ENCODE measurements at regions of chrX and their contacts with region 1.

Region 1: DNA sequence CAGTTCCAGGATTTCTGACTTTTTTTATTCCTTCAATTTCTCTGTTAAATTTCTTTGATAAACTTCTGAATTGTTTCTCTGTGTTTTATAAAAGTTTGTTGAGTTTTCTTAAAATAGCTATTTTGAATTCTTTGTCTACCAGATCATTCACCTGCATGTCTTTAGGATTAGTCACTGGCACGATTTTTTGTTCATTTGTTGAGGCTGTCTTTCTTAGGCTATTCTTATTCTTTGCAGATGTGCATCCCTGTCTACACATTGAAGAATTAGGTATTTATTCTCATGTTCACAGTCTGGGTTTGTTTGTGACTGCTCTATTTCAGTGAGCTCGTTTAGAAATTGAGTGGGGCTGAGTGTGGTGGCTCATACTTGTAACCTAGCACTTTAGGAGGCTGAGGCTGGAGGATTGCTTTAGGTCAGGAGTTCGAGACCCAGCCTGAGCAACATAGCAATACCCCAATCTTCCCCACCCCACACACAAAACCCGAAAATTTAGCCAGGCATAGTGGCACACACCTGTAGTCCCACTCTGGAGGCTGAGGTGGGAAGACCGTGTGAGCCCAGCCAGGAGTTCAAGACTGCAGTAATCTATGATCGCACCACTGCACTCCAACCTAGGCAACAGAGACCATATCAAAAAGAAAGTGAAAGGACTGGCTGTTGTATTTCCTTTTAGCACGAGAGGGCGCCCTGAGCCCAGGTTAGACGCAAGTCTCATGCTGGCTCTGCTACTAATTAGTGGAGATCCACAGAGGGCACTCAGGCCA is 42.0 kb downstream of the F8 start:
- DNase-seq: peak; percentile 48 to 82 (median 74)
- ATAC-seq: peak; percentile 98
- H3K4me3 ChIP-seq: peak overlapping the region; percentile 65
- H3K4me3 Mint-ChIP-seq: peak overlapping the region; percentile 53 to 93 (median 82)
- H3K27ac ChIP-seq: peak overlapping the region; percentile 54
- H3K27ac Mint-ChIP-seq: peak overlapping the region; percentile 73 to 96 (median 88)
- H3K4me1 ChIP-seq: peaks cover 0 to 5% of the 10 kb centered on the region in 2 donors
- H3K4me1 Mint-ChIP-seq: peaks cover 0 to 16% (median 7%) of the 10 kb centered on the region in 7 donors
- H3K27me3 ChIP-seq: no peaks in the 10 kb centered on the region
- H3K27me3 Mint-ChIP-seq: no peaks in the 10 kb centered on the region

Region 2: GRCh38 chrX:155056877-155057792 is 76.6 kb after region 1 on chrX:
- CTCF ChIA-PET with region 1: interaction called, 8 read pairs
- POLR2A ChIA-PET with region 1: interaction called, 3 read pairs
- intact Hi-C with region 1: loop called (anchors 1 kb)
- DNase-seq: peak; percentile 20 to 55 (median 36)
- ATAC-seq: peak; percentile 93
- H3K4me3 ChIP-seq: peak overlapping the region; percentile 47
- H3K4me3 Mint-ChIP-seq: peak overlapping the region; percentile 52 to 81 (median 76)
- H3K27ac ChIP-seq: peak overlapping the region; percentile 30
- H3K27ac Mint-ChIP-seq: peak overlapping the region in 8 of 9 donors; percentile 23 to 81 (median 60)
- H3K4me1 ChIP-seq: peaks cover 0 to 5% of the 10 kb centered on the region in 2 donors
- H3K4me1 Mint-ChIP-seq: peaks cover 0 to 31% (median 21%) of the 10 kb centered on the region in 7 donors
- H3K27me3 ChIP-seq: no peaks in the 10 kb centered on the region
- H3K27me3 Mint-ChIP-seq: no peaks in the 10 kb centered on the region

Region 3: DNA sequence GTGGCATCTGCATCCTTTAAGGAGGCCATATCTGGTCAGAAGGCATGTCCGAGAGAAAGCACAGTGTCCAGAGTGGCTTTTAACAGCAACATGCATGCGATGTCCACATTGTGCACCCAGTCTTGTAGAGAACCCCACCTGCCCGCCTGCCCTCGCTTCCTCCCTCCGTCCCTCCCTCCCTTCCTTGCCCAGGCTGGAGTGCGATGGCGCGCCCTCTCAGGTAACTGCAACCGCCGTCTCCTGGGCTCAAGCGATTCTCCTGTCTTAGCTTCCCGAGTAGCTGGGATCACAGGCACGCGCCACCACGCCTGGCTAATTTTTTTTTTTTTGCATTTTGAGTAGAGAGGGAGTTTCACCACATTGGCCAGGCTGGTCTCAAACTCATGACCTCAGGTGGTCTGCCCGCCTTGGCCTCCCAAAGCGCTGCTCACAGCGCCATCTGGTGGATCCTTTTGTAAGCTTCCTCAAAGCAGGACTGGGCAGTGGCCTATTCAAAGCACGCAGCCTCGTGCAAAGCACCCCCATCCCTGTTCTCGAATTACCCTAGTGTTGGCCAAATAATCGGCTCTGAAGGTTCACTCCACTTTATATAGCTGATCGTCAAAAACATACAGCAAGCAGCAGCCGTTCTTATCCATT is 105.8 kb after region 1 on chrX:
- CTCF ChIA-PET with region 1: interaction called, 6 read pairs
- POLR2A ChIA-PET with region 1: no interaction called
- intact Hi-C with region 1: loop called (anchors 1 to 2 kb)
- DNase-seq: peak in 8 of 9 donors; percentile 13 to 39 (median 22)
- ATAC-seq: peak; percentile 53
- H3K4me3 ChIP-seq: no peak overlapping the region
- H3K4me3 Mint-ChIP-seq: no peak overlapping the region
- H3K27ac ChIP-seq: no peak overlapping the region
- H3K27ac Mint-ChIP-seq: no peak overlapping the region
- H3K4me1 ChIP-seq: no peaks in the 10 kb centered on the region
- H3K4me1 Mint-ChIP-seq: peaks cover 0 to 6% (median 0%) of the 10 kb centered on the region in 7 donors
- H3K27me3 ChIP-seq: no peaks in the 10 kb centered on the region
- H3K27me3 Mint-ChIP-seq: no peaks in the 10 kb centered on the region

Region 4: DNA sequence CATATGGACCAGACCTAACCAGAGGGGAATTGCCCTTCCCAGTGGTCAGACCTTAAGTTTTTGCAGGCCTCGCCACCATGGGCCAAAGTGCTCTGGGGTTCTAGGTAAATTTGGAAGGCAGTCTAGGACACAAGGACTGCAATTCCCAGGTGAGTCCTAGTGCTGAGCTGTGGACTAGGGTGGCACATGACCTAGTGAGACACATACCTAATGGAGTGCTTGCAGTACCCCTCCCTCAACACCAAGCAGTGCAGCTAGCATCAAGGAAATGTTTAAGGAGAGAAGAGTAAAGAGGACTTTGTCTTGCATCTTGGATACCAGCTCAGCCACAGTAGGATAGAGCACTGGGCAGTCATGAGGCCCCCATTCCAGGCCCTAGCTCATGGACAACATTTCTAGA is 151.6 kb after region 1 on chrX:
- CTCF ChIA-PET with region 1: no interaction called
- POLR2A ChIA-PET with region 1: no interaction called
- intact Hi-C with region 1: no loop called
- DNase-seq: no peak
- ATAC-seq: no peak
- H3K4me3 ChIP-seq: no peak overlapping the region
- H3K4me3 Mint-ChIP-seq: no peak overlapping the region
- H3K27ac ChIP-seq: no peak overlapping the region
- H3K27ac Mint-ChIP-seq: no peak overlapping the region
- H3K4me1 ChIP-seq: no peaks in the 10 kb centered on the region
- H3K4me1 Mint-ChIP-seq: no peaks in the 10 kb centered on the region
- H3K27me3 ChIP-seq: no peaks in the 10 kb centered on the region
- H3K27me3 Mint-ChIP-seq: no peaks in the 10 kb centered on the region

Region 5: DNA sequence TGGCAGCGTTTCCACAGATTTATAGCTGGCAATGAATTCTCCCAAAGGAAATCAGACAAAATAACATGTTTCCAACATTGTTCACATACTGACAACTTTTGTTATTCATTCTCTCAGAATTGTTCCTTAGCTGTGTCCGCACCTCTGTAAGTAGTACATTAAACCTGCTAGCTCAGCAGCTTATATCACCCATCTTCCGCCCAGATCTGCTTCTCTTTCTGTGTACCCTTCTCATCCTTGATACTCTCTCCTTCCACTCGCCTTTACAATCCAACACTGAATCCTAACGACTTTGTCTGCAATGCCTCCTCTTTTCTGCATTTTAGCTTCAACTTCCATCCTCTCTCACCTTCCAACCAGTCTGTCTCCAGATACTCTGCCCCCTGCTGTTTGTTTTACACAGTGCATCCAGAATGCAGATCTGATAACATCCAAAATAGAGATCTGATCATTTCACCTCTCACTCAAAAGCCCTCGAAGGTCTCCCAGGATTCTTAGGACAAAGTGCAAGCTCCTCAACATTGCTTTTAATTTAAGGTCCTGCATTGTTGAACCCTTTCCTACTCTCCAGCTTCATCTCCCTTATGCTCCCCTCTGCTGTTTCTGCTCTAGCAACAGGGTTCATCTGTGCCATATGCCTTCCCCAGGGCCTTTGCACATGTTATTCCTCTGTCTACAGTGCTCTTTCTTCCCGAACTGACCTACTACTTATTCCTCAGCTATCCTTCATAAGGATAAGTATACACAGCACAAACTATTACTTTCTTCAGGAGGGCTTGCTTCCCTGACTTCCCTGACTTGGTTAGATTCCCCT is 168.4 kb after region 1 on chrX:
- CTCF ChIA-PET with region 1: no interaction called
- POLR2A ChIA-PET with region 1: no interaction called
- intact Hi-C with region 1: loop called (anchors 1 kb)
- DNase-seq: peak in 8 of 9 donors; percentile 3 to 38 (median 25)
- ATAC-seq: peak; percentile 37
- H3K4me3 ChIP-seq: no peak overlapping the region
- H3K4me3 Mint-ChIP-seq: no peak overlapping the region
- H3K27ac ChIP-seq: no peak overlapping the region
- H3K27ac Mint-ChIP-seq: peak overlapping the region in 3 of 9 donors; percentile 38 to 73 (median 40)
- H3K4me1 ChIP-seq: no peaks in the 10 kb centered on the region
- H3K4me1 Mint-ChIP-seq: peaks cover 0 to 9% (median 4%) of the 10 kb centered on the region in 7 donors
- H3K27me3 ChIP-seq: no peaks in the 10 kb centered on the region
- H3K27me3 Mint-ChIP-seq: peaks cover 0 to 11% (median 0%) of the 10 kb centered on the region in 5 donors

Region 6: DNA sequence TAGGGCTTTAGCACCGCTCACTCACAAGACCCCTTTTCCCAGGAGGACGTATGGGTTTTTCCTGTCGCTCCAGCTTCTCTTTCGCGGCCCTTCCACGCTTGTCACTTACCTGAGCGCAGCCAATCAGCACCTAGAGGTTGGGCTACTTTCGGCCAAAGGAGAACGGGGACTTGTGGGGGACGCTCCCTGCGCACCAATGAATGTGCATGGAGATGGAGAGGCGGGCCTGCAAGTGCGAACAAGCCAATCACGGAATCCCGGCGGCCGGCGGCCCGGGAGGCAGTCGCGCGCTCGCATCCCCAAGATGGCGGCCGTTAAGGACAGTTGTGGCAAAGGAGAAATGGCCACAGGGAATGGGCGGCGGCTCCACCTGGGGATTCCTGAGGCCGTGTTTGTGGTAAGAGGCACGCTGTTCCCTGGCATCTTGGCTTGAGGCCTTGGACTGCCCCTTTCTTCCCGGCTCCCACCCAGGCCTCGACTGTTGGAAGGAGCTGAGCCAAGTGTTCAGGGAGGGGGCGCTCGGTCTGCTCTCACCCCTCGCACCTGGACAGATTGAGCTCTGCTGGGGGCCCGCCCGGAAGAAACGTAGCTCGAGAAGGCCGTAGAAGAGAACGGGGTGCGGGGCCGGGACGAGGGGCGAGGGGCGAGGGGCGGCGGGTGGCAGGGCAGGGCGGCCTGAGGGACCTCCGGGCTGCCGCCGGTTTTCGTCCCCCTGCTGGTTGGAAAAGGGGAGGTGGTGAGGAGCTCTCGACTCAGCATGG is 235.8 kb after region 1 on chrX and contains the start of gene VBP1:
- CTCF ChIA-PET with region 1: no interaction called
- POLR2A ChIA-PET with region 1: no interaction called
- intact Hi-C with region 1: loop called in 1 of 2 experiments (anchors 1 kb)
- DNase-seq: peak; percentile 61 to 89 (median 84)
- ATAC-seq: peak; percentile 99
- H3K4me3 ChIP-seq: peak within 1 kb of the TSS; percentile 73
- H3K4me3 Mint-ChIP-seq: peak within 1 kb of the TSS; percentile 86 to 98 (median 96)
- H3K27ac ChIP-seq: peak within 1 kb of the TSS; percentile 79
- H3K27ac Mint-ChIP-seq: peak within 1 kb of the TSS; percentile 76 to 96 (median 91)
- H3K4me1 ChIP-seq: peaks cover 8 to 16% of the 10 kb centered on the region in 2 donors
- H3K4me1 Mint-ChIP-seq: peaks cover 10 to 36% (median 26%) of the 10 kb centered on the region in 7 donors
- H3K27me3 ChIP-seq: no peaks in the 10 kb centered on the region
- H3K27me3 Mint-ChIP-seq: no peaks in the 10 kb centered on the region
- total RNA-seq, gene VBP1: 17.3 to 57.4 (median 26.4) TPM

Region 7: DNA sequence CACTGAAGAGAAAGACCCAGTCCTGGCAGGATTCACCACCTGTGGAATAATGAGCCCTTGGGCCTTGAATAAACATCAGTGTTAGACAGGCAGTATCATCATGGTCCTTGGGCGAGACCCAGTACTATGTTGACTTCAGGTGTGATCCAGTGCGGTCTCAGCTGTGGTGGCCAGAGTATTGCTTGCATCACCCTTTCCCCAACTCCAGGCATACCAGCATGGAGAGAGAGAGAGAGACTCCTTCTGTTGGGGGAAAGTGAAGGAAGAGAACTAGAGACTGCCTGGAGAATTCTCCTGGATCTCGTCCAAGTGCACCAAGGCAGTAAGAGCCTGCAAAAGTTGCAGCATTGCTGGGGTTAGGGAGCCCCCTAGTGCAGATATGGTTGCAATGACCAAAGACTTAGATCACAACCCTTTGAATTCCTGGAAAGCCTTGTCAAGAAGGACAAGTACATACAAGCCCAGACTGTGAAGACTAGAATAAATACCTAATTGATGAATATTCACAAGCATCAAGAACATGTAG is 839.5 kb after region 1 on chrX:
- CTCF ChIA-PET with region 1: no interaction called
- POLR2A ChIA-PET with region 1: no interaction called
- intact Hi-C with region 1: loop called (anchors 1 to 2 kb)
- DNase-seq: peak in 7 of 9 donors; percentile 12 to 50 (median 39)
- ATAC-seq: peak; percentile 64
- H3K4me3 ChIP-seq: no peak overlapping the region
- H3K4me3 Mint-ChIP-seq: no peak overlapping the region
- H3K27ac ChIP-seq: no peak overlapping the region
- H3K27ac Mint-ChIP-seq: no peak overlapping the region
- H3K4me1 ChIP-seq: no peaks in the 10 kb centered on the region
- H3K4me1 Mint-ChIP-seq: peaks cover 0 to 3% (median 0%) of the 10 kb centered on the region in 7 donors
- H3K27me3 ChIP-seq: no peaks in the 10 kb centered on the region
- H3K27me3 Mint-ChIP-seq: peaks cover 8 to 32% (median 12%) of the 10 kb centered on the region in 5 donors

Measured in naive thymus-derived CD4-positive, alpha-beta T cell (primary cell).